Activated naive CD4-positive, alpha-beta T cell treated with anti-CD3 and anti-CD28 coated beads for 36 hours (primary cell): ENCODE measurements at regions of chr10 and their contacts with region 1.

Region 1: DNA sequence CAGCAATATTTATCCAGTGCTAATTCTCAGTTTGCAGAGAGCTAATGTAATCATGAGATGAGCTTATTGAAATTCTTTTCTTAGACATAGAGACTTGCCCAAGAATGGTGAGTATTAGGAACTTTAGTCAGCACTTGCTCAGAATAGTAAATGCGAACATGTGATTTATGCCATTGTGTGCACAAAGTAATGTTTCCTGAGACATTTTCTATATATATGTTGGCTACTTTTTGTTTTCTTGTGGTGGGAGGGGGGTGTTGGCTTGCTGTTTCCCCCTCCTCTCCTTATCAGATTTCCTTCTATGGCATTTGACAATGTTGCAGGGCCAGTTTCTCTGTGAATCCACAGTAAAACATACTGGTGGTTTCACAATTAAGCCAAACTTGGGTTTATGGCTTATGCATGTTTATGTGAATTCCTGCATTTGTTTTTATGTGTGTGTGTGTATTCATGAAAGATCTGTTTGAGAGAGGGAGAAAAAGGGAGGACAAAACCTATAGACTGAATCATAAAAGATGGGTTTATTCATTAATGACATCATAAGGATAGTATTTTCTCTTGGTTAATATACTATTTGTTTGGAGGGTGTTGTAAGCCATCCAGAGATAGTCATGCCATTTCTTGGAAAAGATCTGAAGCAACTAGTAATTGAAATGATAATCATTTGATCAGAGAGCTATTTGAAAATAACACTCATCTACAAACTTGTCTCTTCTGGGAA is 36.3 kb downstream of the ARID5B start:
- DNase-seq: no peak
- H3K4me3 Mint-ChIP-seq: peak overlapping the region; percentile 40
- H3K27ac Mint-ChIP-seq: peak overlapping the region; percentile 93
- H3K4me1 Mint-ChIP-seq: peaks cover 92% of the 10 kb centered on the region
- H3K27me3 Mint-ChIP-seq: no peaks in the 10 kb centered on the region

Region 2: DNA sequence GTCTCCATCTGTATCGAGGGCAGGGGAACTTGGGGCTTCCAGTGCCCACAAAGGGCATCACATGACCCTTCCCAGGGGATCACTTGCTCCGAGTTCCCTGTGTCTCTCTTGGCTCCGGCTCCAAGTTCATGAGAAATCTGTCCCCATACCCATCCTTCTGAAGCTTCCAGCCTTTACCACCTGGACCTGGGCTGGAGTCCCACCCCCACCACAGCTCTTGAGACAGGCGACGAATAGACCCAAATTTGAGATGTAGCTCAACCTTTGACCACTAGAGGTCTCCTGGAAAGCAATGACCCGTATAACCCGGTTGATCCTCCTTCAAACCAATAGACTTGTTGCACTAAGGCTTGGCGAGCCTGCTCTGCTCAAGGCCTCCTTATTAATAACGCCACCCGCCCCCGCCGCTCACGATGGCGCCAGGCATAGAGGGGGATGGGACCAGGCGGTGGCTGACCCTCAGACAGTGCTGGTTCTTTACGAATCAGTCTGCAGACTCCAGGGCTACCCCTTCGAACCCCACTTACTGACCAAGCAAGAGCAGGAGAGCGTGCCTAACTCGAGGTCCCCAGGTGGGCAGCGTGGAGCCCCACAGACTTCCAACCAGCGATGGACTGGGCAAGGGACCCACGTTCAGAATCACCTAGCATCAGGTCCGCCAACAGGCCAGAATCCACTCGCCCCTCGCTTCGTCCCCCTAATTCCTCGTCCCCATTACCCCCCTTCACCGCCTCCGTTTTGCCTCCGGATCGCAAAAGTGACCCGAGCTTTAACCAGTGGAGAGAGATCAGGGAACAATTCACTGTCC is 40.7 kb before region 1 on chr10:
- CTCF ChIA-PET with region 1: interaction called, 33 read pairs
- intact Hi-C with region 1: no loop called
- DNase-seq: peak; percentile 78
- H3K4me3 Mint-ChIP-seq: peak overlapping the region; percentile 77
- H3K27ac Mint-ChIP-seq: peak overlapping the region; percentile 90
- H3K4me1 Mint-ChIP-seq: peaks cover 40% of the 10 kb centered on the region
- H3K27me3 Mint-ChIP-seq: no peaks in the 10 kb centered on the region

Region 3: DNA sequence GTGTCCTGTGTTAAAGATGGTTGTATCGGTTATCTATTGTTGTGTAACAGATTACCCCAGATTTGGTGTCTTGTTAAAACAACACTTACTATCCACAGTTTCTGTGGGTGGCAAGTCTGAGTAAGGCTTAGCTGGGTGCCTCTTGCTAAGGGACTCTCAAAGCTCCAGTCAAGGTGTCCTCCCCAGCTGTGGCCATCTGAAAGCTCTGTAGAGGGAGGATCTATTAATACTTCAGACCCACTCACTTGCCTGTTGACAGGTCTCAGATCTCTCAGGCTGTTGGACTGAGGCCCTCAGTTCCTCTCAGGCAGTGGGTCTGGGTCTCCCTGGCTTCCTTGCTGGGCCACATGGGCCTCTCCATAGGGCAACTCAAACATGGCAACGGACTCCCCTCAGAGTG is 16.6 kb before region 1 on chr10:
- CTCF ChIA-PET with region 1: no interaction called
- intact Hi-C with region 1: loop called (anchors 2 kb)
- DNase-seq: no peak
- H3K4me3 Mint-ChIP-seq: no peak overlapping the region
- H3K27ac Mint-ChIP-seq: no peak overlapping the region
- H3K4me1 Mint-ChIP-seq: peaks cover 57% of the 10 kb centered on the region
- H3K27me3 Mint-ChIP-seq: no peaks in the 10 kb centered on the region